PC-3 (cell line): ENCODE measurements at regions of chr2 and their contacts with region 1.

Region 1: DNA sequence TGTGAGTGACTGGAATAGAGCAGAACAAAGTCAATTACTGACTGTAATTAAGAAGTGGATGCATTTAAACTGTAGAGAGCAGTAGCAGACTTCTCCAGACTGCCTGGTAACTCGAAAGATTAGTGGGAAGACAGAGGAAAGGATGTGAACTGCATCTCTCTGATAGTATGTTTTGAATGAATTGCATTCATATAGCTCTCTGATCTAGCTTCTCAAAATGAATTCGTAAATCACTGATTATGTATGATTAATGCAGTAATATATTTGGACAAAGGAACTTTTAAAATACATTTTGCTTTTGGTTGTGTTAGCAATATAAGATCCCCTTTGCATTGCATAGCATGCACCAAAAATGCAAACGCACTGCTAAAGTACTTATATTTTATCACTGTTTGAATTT is 304.0 kb downstream of the ARHGAP15 start:
- DNase-seq: no peak
- ATAC-seq: peak; percentile 21; the same call in 1 of the 2 replicates
- H3K4me3 ChIP-seq: no peak overlapping the region
- H3K27ac ChIP-seq: no peak overlapping the region
- H3K4me1 ChIP-seq: peaks cover 30% of the 10 kb centered on the region
- H3K27me3 ChIP-seq: no peaks in the 10 kb centered on the region
- CTCF ChIP-seq: no peak

Region 2: DNA sequence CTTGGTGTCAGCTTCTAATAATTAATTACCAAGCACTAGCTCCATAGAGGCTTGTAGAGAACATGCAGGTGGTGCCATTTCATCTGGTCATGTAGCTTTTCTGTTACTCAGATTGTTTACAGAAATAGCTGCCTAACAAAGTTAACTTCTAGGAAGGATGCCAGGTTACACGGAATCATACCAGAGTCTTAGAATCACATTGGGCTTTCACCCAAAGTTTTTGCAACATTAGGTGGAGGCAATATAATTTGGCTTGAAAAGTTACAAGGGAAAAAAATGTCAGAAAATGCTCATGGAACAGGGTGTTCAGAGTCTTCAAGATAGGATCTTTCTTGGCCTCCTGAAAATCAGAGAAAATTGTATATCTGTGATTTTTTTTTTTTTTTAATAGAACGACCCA is 168.4 kb before region 1 on chr2:
- CTCF ChIA-PET with region 1: no interaction called
- POLR2A ChIA-PET with region 1: no interaction called
- intact Hi-C with region 1: loop called (anchors 2 kb)
- DNase-seq: peak; percentile 63
- ATAC-seq: peak; percentile 73
- H3K4me3 ChIP-seq: no peak overlapping the region
- H3K27ac ChIP-seq: no peak overlapping the region
- H3K4me1 ChIP-seq: no peaks in the 10 kb centered on the region
- H3K27me3 ChIP-seq: no peaks in the 10 kb centered on the region
- CTCF ChIP-seq: no peak

Region 3: DNA sequence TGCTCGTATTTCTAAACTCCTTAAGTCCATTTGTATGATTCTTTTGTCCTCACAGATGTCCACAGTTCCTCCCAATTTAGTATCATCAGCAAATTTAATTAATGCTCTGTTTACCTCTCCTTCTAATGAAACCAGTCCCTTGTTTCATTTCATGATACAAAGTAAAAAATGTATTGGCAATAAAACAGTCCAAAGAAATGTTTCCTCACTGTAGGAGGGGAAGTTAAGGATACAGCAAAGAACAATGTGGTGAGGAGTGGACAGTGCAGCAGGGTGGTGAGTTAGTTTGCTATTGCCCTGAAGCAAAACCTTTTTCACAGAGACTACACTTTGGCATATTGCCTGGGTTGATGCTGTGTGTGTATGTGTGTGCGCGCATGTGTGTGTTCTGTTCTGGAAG is 97.5 kb after region 1 on chr2:
- CTCF ChIA-PET with region 1: interaction called, 10 read pairs
- POLR2A ChIA-PET with region 1: no interaction called
- intact Hi-C with region 1: no loop called
- DNase-seq: no peak
- ATAC-seq: no peak
- H3K4me3 ChIP-seq: no peak overlapping the region
- H3K27ac ChIP-seq: no peak overlapping the region
- H3K4me1 ChIP-seq: no peaks in the 10 kb centered on the region
- H3K27me3 ChIP-seq: no peaks in the 10 kb centered on the region
- CTCF ChIP-seq: no peak